ENCODE measurements at regions of chr3 and their contacts with region 1.

Region 1: DNA sequence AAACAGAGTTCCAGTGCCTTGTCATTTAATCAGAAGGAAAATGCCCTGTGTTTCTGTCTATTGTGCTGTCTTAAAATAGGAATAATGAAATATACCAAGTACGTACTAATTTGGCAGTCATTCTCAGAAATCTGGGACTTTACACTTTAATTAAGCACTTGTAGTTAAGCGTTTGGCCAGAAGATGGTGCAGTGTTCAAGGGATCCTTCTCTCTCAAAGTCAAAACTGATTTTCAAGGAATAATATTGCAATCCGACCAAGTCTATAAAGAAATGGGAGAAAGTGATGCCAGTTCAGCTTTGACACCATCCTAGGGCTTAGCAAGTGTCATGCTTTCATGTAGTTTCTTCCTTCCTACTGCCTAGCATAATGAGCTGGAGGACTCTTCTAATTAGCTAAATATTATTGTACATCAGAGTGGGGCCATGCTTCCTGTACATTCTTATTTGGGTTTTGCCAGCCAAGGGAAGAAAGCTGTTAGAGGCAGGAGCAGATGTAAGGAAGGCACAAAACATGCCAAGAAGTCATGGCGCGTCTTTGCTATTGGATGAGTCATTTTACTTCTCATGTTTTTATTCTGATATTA is 64.8 kb downstream of the SAMMSON start:
- DNase-seq: peak in 1 of 2 experiments; percentile 28
- H3K4me3 ChIP-seq: no peak overlapping the region
- H3K4me3 Mint-ChIP-seq: no peak overlapping the region
- H3K27ac Mint-ChIP-seq: no peak overlapping the region
- H3K4me1 ChIP-seq: no peaks in the 10 kb centered on the region
- H3K4me1 Mint-ChIP-seq: no peaks in the 10 kb centered on the region
- H3K27me3 ChIP-seq: no peaks in the 10 kb centered on the region
- H3K27me3 Mint-ChIP-seq: peaks cover 8% of the 10 kb centered on the region
- CTCF ChIP-seq: peak; percentile 60 to 61

Region 2: GRCh38 chr3:69671082-69671952 is 393.0 kb before region 1 on chr3:
- CTCF ChIA-PET with region 1: no interaction called
- POLR2A ChIA-PET with region 1: no interaction called
- intact Hi-C with region 1: no loop called
- DNase-seq: peak in 1 of 2 experiments; percentile 49
- H3K4me3 ChIP-seq: no peak overlapping the region
- H3K4me3 Mint-ChIP-seq: no peak overlapping the region
- H3K27ac Mint-ChIP-seq: no peak overlapping the region
- H3K4me1 ChIP-seq: no peaks in the 10 kb centered on the region
- H3K4me1 Mint-ChIP-seq: no peaks in the 10 kb centered on the region
- H3K27me3 ChIP-seq: no peaks in the 10 kb centered on the region; the same call in 1 of the 2 replicates
- H3K27me3 Mint-ChIP-seq: no peaks in the 10 kb centered on the region
- CTCF ChIP-seq: peak; percentile 58 to 67

Region 3: GRCh38 chr3:69983546-69984265 is 80.6 kb before region 1 on chr3:
- CTCF ChIA-PET with region 1: no interaction called
- POLR2A ChIA-PET with region 1: no interaction called
- intact Hi-C with region 1: no loop called
- DNase-seq: no peak
- H3K4me3 ChIP-seq: no peak overlapping the region
- H3K4me3 Mint-ChIP-seq: no peak overlapping the region
- H3K27ac Mint-ChIP-seq: no peak overlapping the region
- H3K4me1 ChIP-seq: no peaks in the 10 kb centered on the region
- H3K4me1 Mint-ChIP-seq: no peaks in the 10 kb centered on the region
- H3K27me3 ChIP-seq: no peaks in the 10 kb centered on the region
- H3K27me3 Mint-ChIP-seq: peaks cover 4% of the 10 kb centered on the region
- CTCF ChIP-seq: no peak

Region 4: GRCh38 chr3:70020906-70021660 is 43.2 kb before region 1 on chr3:
- CTCF ChIA-PET with region 1: no interaction called
- POLR2A ChIA-PET with region 1: no interaction called
- intact Hi-C with region 1: no loop called
- DNase-seq: no peak
- H3K4me3 ChIP-seq: no peak overlapping the region
- H3K4me3 Mint-ChIP-seq: no peak overlapping the region
- H3K27ac Mint-ChIP-seq: no peak overlapping the region
- H3K4me1 ChIP-seq: peaks cover 3% of the 10 kb centered on the region; the same call in 1 of the 2 replicates
- H3K4me1 Mint-ChIP-seq: no peaks in the 10 kb centered on the region
- H3K27me3 ChIP-seq: no peaks in the 10 kb centered on the region
- H3K27me3 Mint-ChIP-seq: peaks cover 3% of the 10 kb centered on the region
- CTCF ChIP-seq: no peak

Region 5: DNA sequence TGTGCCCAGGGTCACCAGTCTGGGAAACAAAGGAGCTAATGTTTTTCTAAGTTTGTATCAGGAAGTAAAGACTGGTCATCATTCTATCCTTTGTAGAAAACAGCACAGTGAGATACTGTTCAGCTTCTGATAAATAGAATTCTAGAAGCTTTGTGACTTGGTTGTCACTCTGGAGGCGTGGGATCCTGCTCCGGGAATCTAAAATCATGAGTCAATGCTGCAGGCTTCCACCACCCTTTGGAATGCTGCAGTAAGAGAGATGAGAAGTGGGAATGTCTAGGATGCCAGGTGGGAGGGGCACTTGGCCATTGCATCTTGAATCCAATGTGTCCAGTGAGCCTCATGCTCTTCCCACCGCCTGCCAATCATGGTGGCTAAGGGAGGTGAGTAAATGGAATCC is 23.9 kb before region 1 on chr3:
- CTCF ChIA-PET with region 1: no interaction called
- POLR2A ChIA-PET with region 1: no interaction called
- intact Hi-C with region 1: no loop called
- DNase-seq: no peak
- H3K4me3 ChIP-seq: no peak overlapping the region
- H3K4me3 Mint-ChIP-seq: no peak overlapping the region
- H3K27ac Mint-ChIP-seq: no peak overlapping the region
- H3K4me1 ChIP-seq: no peaks in the 10 kb centered on the region
- H3K4me1 Mint-ChIP-seq: no peaks in the 10 kb centered on the region
- H3K27me3 ChIP-seq: no peaks in the 10 kb centered on the region
- H3K27me3 Mint-ChIP-seq: peaks cover 5% of the 10 kb centered on the region
- CTCF ChIP-seq: no peak

Region 6: GRCh38 chr3:70108072-70108471 is 43.8 kb after region 1 on chr3:
- CTCF ChIA-PET with region 1: interaction called, 3 read pairs
- POLR2A ChIA-PET with region 1: no interaction called
- intact Hi-C with region 1: loop called (anchors 5 kb)
- DNase-seq: peak; percentile 35 to 36
- H3K4me3 ChIP-seq: no peak overlapping the region
- H3K4me3 Mint-ChIP-seq: no peak overlapping the region
- H3K27ac Mint-ChIP-seq: no peak overlapping the region
- H3K4me1 ChIP-seq: no peaks in the 10 kb centered on the region
- H3K4me1 Mint-ChIP-seq: no peaks in the 10 kb centered on the region
- H3K27me3 ChIP-seq: no peaks in the 10 kb centered on the region
- H3K27me3 Mint-ChIP-seq: peaks cover 13% of the 10 kb centered on the region
- CTCF ChIP-seq: peak; percentile 39 to 43